GM12878 (cell line): ENCODE measurements at regions of chr5 and their contacts with region 1.

Region 1: DNA sequence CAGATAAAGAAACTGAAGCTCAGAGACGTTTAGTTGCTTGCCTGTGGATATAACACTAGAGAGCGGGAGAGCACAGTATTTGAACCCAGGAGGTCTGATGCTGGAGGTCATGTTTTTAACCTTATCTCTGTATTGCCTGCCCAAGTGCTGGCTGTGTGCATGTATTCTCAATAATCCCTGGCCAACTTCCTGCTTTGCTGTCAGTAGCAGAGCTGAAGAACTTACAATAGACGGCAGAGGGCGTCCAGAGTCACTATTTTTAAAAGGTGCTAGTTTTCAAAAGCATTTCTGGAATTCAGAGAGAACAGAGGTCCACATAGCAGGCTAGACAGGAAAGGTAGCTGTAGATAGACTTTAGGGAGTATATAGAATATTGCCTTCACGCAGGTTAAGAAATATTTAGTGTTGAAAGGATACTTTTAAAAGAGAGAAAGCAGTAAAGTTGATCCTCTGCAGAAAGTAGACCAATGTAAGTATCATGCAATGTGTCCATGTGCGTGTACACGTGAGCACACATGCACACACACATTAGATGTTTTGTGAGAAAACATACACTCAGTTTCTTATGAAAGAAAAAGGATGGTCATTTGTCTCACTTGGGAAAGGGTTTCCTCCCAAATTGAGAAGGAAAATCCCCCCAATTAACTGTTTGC is 46.3 kb downstream of the PTCD2 start:
- DNase-seq: peak; percentile 43
- ATAC-seq: peak; percentile 98
- H3K4me3 ChIP-seq: no peak overlapping the region
- H3K27ac ChIP-seq: no peak overlapping the region
- H3K4me1 ChIP-seq: peaks cover 17% of the 10 kb centered on the region
- H3K27me3 ChIP-seq: no peaks in the 10 kb centered on the region
- CTCF ChIP-seq: peak; percentile 67 to 82 (median 76)
- EP300 ChIP-seq: no peak
- POLR2A ChIP-seq: no peak
- RAD21 ChIP-seq: peak; percentile 97

Region 2: DNA sequence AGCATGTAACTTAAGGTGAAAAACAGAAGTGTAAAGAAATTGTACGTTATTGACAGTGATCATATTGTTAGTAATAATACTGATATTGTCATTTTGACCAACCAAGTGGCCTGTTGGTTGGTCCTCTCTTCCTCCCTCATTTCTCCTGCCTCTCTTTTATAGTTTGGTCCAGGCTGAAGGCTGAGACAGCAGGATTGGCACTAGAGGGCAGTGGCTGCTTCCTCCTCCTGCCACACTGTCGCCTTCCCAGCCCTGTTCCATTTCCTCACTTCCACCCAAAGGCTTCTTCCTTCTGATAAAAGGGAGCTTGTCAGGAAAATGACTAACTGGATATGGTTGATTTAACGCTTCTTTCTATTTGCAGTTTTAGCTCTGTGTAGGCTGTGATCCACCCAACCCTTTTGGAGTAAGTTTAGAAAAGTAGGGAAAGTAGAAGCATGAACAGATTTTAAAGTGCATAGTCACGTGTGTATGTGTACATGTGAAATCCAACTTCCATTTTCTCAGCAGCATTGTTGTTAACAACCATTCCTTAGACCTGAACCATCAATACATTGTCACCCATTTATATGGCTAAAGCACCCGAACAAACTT is 10.6 kb before region 1 on chr5:
- CTCF ChIA-PET with region 1: interaction called, 30 read pairs
- POLR2A ChIA-PET with region 1: no interaction called
- RAD21 ChIA-PET with region 1: no interaction called
- SMC1A ChIA-PET with region 1: interaction called, 19 read pairs
- in situ Hi-C with region 1: no loop called
- intact Hi-C with region 1: no loop called
- DNase-seq: no peak
- ATAC-seq: no peak
- H3K4me3 ChIP-seq: no peak overlapping the region
- H3K27ac ChIP-seq: no peak overlapping the region
- H3K4me1 ChIP-seq: no peaks in the 10 kb centered on the region
- H3K27me3 ChIP-seq: no peaks in the 10 kb centered on the region
- CTCF ChIP-seq: peak; percentile 9 to 33 (median 28); a peak in 3 of 6 replicates
- EP300 ChIP-seq: no peak
- POLR2A ChIP-seq: no peak
- RAD21 ChIP-seq: no peak

Region 3: GRCh38 chr5:72387985-72388384 is 21.5 kb after region 1 on chr5:
- CTCF ChIA-PET with region 1: interaction called, 61 read pairs
- POLR2A ChIA-PET with region 1: no interaction called
- RAD21 ChIA-PET with region 1: interaction called, 28 read pairs
- SMC1A ChIA-PET with region 1: interaction called, 6 read pairs
- in situ Hi-C with region 1: no loop called
- intact Hi-C with region 1: no loop called
- DNase-seq: no peak
- ATAC-seq: no peak
- H3K4me3 ChIP-seq: no peak overlapping the region
- H3K27ac ChIP-seq: no peak overlapping the region
- H3K4me1 ChIP-seq: no peaks in the 10 kb centered on the region
- H3K27me3 ChIP-seq: no peaks in the 10 kb centered on the region; a peak in 1 of 4 replicates
- CTCF ChIP-seq: no peak
- EP300 ChIP-seq: no peak
- POLR2A ChIP-seq: no peak
- RAD21 ChIP-seq: no peak

Region 4: DNA sequence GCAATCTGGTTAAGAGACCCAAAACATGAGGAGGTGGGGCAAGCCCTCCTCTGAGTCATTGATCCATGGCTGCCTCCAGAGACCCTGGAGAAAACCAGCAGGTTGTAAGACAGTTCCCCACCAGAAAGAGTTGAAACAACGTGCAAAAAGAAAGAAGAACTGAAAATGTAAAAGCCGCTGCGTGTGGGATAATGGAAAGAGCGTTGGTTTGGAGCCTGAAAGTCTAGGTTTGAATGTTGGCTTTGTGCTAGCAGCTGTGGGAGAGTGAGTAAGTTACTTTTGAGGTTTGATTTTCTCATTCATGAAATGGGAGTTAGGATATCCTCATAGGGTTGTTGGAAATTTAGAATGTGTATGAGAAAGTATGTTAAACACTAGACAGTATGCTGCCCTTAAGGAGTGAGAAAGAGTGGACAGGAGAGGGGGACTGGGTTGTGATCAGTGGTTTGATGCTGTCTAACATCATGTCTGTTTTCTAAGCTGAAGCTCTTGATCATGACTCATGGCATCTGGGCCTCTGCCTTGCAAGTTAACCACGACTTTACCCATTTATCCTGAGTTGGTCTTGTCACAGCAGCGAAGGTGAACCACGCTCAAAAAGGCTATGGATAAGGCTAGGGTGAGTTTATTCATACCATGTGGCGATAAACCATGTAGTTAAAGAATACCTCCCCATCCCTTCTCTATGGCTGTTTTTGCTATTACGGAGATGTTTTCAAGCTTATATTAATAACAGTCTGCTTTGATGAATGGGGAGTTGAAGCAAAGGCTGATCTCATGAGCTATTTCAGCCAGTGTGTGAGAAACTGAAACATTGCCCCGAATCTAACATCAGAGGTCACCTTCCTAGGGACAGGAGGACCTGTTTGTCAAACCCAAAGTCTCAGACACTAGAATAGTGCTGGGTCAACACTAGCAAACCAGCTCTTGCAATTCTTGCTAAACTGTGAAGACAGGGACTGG is 99.4 kb after region 1 on chr5:
- CTCF ChIA-PET with region 1: interaction called, 6 read pairs
- POLR2A ChIA-PET with region 1: no interaction called
- RAD21 ChIA-PET with region 1: interaction called, 5 read pairs
- SMC1A ChIA-PET with region 1: interaction called, 8 read pairs
- in situ Hi-C with region 1: no loop called
- intact Hi-C with region 1: loop called (anchors 1 kb)
- DNase-seq: peak; percentile 92
- ATAC-seq: peak; percentile 83
- H3K4me3 ChIP-seq: peak overlapping the region; percentile 43
- H3K27ac ChIP-seq: peak overlapping the region; percentile 98
- H3K4me1 ChIP-seq: peaks cover 44% of the 10 kb centered on the region
- H3K27me3 ChIP-seq: no peaks in the 10 kb centered on the region
- CTCF ChIP-seq: no peak
- EP300 ChIP-seq: peak; percentile 85 to 92
- POLR2A ChIP-seq: peak; percentile 39; the same call in 1 of the 2 replicates
- RAD21 ChIP-seq: peak; percentile 35; the same call in 1 of the 2 replicates

Region 5: GRCh38 chr5:72584466-72584865 is 218.0 kb after region 1 on chr5:
- CTCF ChIA-PET with region 1: interaction called, 5 read pairs
- POLR2A ChIA-PET with region 1: no interaction called
- RAD21 ChIA-PET with region 1: interaction called, 3 read pairs
- SMC1A ChIA-PET with region 1: no interaction called
- in situ Hi-C with region 1: no loop called
- intact Hi-C with region 1: loop called (anchors 1 kb)
- DNase-seq: peak; percentile 36
- ATAC-seq: peak; percentile 76
- H3K4me3 ChIP-seq: no peak overlapping the region
- H3K27ac ChIP-seq: no peak overlapping the region
- H3K4me1 ChIP-seq: peaks cover 10% of the 10 kb centered on the region
- H3K27me3 ChIP-seq: no peaks in the 10 kb centered on the region
- CTCF ChIP-seq: 0 out of 6 replicates have a peak, but pooled peaks of 1 of the 3 experiments have one; percentile 10
- EP300 ChIP-seq: no peak
- POLR2A ChIP-seq: no peak
- RAD21 ChIP-seq: peak; percentile 37; the same call in 1 of the 2 replicates

Region 6: GRCh38 chr5:72816311-72817145 is 450.1 kb after region 1 on chr5 and contains the start of gene TNPO1:
- CTCF ChIA-PET with region 1: interaction called, 23 read pairs
- POLR2A ChIA-PET with region 1: interaction called, 3 read pairs
- RAD21 ChIA-PET with region 1: interaction called, 24 read pairs
- SMC1A ChIA-PET with region 1: interaction called, 5 read pairs
- in situ Hi-C with region 1: loop called (anchors 10 kb)
- intact Hi-C with region 1: loop called (anchors 2 kb)
- DNase-seq: peak; percentile 45
- ATAC-seq: peak; percentile 93
- H3K4me3 ChIP-seq: peak within 1 kb of the TSS; percentile 64
- H3K27ac ChIP-seq: peak within 1 kb of the TSS; percentile 91
- H3K4me1 ChIP-seq: 0 out of 2 replicates have a peak, but pooled peaks cover 2% of the 10 kb centered on the region
- H3K27me3 ChIP-seq: no peaks in the 10 kb centered on the region
- CTCF ChIP-seq: no peak
- EP300 ChIP-seq: no peak
- POLR2A ChIP-seq: peak; percentile 91
- RAD21 ChIP-seq: no peak
- polyA plus RNA-seq, gene TNPO1: 18.1 to 37.3 TPM